Naive thymus-derived CD4-positive, alpha-beta T cell (primary cell): ENCODE measurements at regions of chr1 and their contacts with region 1.

Region 1: DNA sequence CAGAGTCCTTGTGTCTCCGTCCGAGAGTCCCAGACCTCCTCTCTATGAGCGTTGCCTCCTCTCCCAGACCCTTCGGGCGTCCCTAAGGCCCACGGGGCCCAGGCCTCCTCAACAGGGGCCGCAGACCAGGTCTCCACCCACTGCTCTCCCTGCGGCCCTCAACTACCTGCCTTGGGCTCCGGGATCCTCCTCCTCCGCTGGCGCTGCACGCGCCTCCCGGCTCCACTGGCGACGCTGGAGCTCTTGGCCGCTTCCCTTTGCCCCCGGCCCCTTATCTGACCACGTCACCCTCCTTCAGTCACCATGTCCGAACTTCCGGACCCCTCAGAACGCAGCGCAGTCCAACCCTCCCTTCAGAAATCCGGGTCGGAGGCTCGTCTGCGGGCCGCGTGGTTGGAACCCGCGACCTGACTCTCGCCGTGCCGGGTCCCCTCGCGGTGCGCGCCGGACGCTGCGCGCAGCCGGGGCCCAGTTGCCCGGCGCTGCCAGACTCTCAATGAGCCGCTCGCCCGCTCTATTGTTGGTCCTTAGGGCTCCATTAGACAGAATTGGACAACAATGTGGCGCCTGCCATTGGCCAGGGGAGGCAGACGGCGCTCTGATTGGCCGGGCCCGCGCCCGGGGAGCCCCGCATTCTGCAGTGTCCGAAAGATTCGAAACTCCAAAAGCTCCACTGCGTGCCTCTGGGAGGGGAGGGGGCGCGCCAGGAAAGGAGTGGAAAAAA is at the start of gene DMRTA2:
- DNase-seq: peak in 1 of 9 donors; percentile 33
- ATAC-seq: no peak
- H3K4me3 ChIP-seq: peak within 1 kb of the TSS; percentile 56
- H3K4me3 Mint-ChIP-seq: peak within 1 kb of the TSS; percentile 81 to 94 (median 85)
- H3K27ac ChIP-seq: no peak within 1 kb of the TSS
- H3K27ac Mint-ChIP-seq: peak within 1 kb of the TSS in 2 of 9 donors; percentile 32 to 82
- H3K4me1 ChIP-seq: no peaks in the 10 kb centered on the region
- H3K4me1 Mint-ChIP-seq: peaks cover 33 to 69% (median 49%) of the 10 kb centered on the region in 7 donors
- H3K27me3 ChIP-seq: peaks cover 8 to 25% of the 10 kb centered on the region in 2 donors
- H3K27me3 Mint-ChIP-seq: peaks cover 71 to 86% (median 75%) of the 10 kb centered on the region in 5 donors
- total RNA-seq, gene DMRTA2: not detected

Region 2: DNA sequence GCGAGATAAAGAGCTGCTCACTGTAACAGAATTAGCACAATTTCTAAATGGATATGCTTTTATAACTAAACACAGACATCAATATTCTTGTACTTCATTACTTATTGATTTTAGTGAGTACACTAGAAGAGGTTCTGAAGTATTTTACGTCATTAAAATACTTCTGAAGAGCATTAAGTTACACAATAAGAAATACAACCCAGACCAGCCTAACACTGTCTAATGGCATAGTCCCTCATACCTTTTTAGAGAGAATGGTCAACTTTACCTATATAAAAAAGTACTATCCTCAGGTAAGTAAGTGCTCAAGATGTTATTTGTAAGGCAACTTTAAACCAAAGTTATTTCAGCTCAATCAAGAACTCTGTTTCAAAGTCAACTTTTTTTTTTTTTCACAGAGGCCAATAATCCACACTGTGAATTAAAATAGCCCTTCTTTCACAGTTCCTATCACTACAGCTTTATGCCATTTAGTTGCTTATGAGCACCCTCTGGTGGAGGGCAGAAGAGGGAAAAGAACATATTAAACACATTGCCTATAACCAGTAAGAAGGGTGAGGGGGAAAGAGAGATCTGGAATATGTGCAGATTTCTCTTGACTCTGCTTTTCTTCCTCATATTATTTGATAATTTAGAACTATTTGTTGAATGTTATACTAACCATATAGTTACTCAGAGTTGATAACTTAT is 182.2 kb after region 1 on chr1:
- CTCF ChIA-PET with region 1: no interaction called
- POLR2A ChIA-PET with region 1: no interaction called
- intact Hi-C with region 1: loop called in 1 of 2 experiments (anchors 5 kb)
- DNase-seq: no peak
- ATAC-seq: no peak
- H3K4me3 ChIP-seq: no peak overlapping the region
- H3K4me3 Mint-ChIP-seq: no peak overlapping the region
- H3K27ac ChIP-seq: no peak overlapping the region
- H3K27ac Mint-ChIP-seq: no peak overlapping the region
- H3K4me1 ChIP-seq: no peaks in the 10 kb centered on the region
- H3K4me1 Mint-ChIP-seq: peaks cover 0 to 2% (median 0%) of the 10 kb centered on the region in 7 donors
- H3K27me3 ChIP-seq: no peaks in the 10 kb centered on the region
- H3K27me3 Mint-ChIP-seq: no peaks in the 10 kb centered on the region